Activated B cell treated with CpG ODN at 0.5 μM for 24 hours (primary cell): ENCODE measurements at regions of chr10 and their contacts with region 1.

Region 1: DNA sequence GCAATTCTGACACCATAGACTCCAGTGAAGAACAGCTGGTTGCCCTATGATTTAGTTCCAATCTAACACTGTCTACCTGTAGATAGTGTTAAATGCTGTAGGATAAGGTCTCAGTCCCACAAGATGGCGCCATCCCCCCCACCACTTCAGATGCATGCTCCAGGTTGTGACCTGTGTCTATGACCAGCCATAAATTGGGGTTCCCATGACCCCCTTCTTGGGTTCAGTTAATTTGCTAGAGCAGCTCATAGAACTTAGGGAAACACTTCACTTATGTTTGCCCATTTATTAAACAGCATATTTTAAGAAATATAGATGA is 13.1 kb downstream of the CCSER2 start:
- DNase-seq: no peak
- ATAC-seq: no peak
- H3K4me3 Mint-ChIP-seq: no peak overlapping the region
- H3K27ac Mint-ChIP-seq: no peak overlapping the region
- H3K4me1 Mint-ChIP-seq: peaks cover 39% of the 10 kb centered on the region
- H3K27me3 Mint-ChIP-seq: no peaks in the 10 kb centered on the region
- CTCF ChIP-seq: no peak

Region 2: DNA sequence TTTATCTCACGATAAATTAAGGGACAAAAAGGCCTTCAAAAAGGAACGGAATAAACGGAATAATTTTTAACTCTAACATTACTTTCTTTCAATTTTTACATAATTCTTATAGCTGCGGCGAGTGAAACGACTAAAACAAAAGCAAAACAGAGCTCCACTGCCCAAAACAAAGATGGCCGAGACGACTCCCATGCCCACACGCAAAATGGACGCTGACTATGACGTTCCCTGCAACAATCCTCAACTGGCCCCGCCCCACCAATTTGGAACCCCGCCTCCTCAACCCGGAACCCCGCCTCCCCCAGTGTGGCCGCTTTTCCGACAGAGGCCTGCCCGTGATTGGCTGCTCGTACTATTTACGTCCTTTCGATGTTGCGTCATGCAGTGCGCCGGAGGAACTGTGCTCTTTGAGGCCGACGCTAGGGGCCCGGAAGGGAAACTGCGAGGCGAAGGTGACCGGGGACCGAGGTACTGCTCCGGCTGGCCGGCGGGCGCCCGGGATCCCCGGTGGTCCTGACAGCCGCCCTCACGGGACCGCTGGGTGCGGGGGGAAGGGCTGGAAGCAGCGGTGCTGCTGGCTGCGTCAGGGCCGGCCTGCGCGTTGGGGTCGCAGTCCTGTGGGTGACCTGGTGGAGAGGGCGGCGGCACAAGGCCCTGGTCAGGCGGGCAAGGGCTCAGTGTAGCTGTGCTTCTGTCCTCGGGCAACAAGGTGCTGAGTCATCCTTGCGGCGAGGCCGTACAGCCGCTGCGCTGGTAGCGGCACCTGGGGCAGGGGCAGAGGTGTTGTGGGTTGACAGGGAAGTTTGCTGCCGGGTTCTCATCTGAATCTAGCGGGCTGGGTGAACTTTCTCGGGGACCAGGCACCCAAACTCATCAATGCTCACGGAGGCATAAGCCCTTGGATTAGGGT is 202.1 kb before region 1 on chr10 and contains the start of gene GHITM:
- CTCF ChIA-PET with region 1: no interaction called
- POLR2A ChIA-PET with region 1: no interaction called
- intact Hi-C with region 1: no loop called
- DNase-seq: peak; percentile 98
- ATAC-seq: peak; percentile 96
- H3K4me3 Mint-ChIP-seq: peak within 1 kb of the TSS; percentile 96
- H3K27ac Mint-ChIP-seq: peak within 1 kb of the TSS; percentile 94
- H3K4me1 Mint-ChIP-seq: peaks cover 32% of the 10 kb centered on the region
- H3K27me3 Mint-ChIP-seq: no peaks in the 10 kb centered on the region
- CTCF ChIP-seq: no peak
- total RNA-seq, gene GHITM: 113 and 114 TPM in 2 replicates

Region 3: DNA sequence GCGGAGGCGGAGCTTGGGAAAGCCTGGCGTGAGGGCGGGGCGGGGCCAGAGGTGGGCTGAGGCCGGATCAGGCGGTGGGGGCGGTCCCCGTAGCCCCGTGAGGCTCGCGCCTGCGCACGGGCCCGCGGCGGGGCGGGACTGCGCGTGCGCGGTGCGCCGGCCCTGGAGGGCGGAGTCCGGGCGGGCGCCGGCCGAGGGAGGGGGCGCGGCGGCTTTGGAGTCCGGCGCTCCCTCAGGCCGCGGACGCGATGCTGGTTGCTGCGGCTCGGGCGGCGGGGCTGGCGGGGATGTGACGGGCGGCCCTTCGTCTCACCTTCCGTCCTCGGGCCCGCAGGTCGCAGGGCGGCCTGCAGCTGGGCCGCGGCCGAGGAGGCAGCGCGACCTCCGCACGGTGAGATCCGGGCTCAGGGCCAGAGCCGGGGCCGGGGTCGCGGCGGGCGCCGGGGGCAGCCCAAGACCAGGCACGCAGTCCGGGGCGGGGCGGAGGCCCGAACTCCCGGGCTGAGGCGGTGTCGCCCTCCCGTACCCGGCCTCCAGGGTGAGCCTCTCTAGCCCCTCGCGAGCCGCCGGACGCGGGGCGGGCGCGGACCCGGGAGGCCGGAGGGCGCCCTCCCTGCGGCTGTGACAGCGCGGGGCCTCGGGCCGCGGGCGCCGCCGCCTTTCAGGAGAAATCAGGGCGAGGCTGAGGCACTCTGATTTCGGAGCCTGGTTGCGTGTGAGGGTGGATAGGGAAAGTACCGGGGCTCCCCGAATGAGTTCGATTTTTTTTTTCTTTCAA is 12.9 kb before region 1 on chr10 and contains the start of gene CCSER2:
- CTCF ChIA-PET with region 1: no interaction called
- POLR2A ChIA-PET with region 1: interaction called, 3 read pairs
- intact Hi-C with region 1: loop called (anchors 2 kb)
- DNase-seq: peak; percentile 98
- ATAC-seq: peak; percentile 83
- H3K4me3 Mint-ChIP-seq: peak within 1 kb of the TSS; percentile 92
- H3K27ac Mint-ChIP-seq: peak within 1 kb of the TSS; percentile 95
- H3K4me1 Mint-ChIP-seq: peaks cover 32% of the 10 kb centered on the region
- H3K27me3 Mint-ChIP-seq: no peaks in the 10 kb centered on the region
- CTCF ChIP-seq: no peak
- total RNA-seq, gene CCSER2: 52.4 and 57.1 TPM in 2 replicates

Region 4: GRCh38 chr10:84352251-84352842 is 10.8 kb after region 1 on chr10:
- CTCF ChIA-PET with region 1: interaction called, 23 read pairs
- POLR2A ChIA-PET with region 1: interaction called, 3 read pairs
- intact Hi-C with region 1: no loop called
- DNase-seq: no peak
- ATAC-seq: peak; percentile 70
- H3K4me3 Mint-ChIP-seq: no peak overlapping the region
- H3K27ac Mint-ChIP-seq: no peak overlapping the region
- H3K4me1 Mint-ChIP-seq: peaks cover 9% of the 10 kb centered on the region
- H3K27me3 Mint-ChIP-seq: no peaks in the 10 kb centered on the region
- CTCF ChIP-seq: no peak

Region 5: GRCh38 chr10:84521013-84521412 is 179.5 kb after region 1 on chr10:
- CTCF ChIA-PET with region 1: no interaction called
- POLR2A ChIA-PET with region 1: no interaction called
- intact Hi-C with region 1: no loop called
- DNase-seq: no peak
- ATAC-seq: no peak
- H3K4me3 Mint-ChIP-seq: no peak overlapping the region
- H3K27ac Mint-ChIP-seq: no peak overlapping the region
- H3K4me1 Mint-ChIP-seq: no peaks in the 10 kb centered on the region
- H3K27me3 Mint-ChIP-seq: peaks cover 1% of the 10 kb centered on the region
- CTCF ChIP-seq: no peak